ENCODE measurements at regions of chr11 and their contacts with region 1.

Region 1: DNA sequence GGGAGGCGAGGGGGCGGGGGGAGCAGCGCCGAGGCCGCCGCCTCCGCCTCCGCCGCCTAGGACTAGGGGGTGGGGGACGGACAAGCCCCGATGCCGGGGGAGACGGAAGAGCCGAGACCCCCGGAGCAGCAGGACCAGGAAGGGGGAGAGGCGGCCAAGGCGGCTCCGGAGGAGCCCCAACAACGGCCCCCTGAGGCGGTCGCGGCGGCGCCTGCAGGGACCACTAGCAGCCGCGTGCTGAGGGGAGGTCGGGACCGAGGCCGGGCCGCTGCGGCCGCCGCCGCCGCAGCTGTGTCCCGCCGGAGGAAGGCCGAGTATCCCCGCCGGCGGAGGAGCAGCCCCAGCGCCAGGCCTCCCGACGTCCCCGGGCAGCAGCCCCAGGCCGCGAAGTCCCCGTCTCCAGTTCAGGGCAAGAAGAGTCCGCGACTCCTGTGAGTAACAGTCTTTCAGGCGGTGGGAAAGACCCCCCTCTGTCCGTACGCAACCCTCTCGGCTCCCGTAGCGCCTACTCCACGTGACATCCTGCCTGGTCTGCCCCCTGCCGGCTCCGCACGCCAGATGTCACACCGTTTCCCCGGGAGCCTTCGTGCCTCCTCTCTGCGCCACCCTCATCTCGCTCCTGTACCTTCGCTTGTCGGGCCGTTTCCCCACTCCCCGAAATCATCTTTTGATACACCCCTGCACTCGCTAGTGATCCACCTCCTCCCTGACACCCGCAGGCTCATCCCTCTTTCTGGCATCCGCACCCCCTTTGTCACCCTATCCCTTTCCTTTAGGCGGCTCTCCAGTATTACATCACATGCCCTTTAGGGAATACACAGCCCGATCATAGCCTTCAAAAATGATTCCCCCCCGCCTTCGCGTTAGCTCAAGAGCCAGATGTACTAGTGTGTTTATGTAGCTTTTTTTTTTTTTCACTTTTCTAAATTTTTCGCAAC is 598 bp downstream of the ZFP91 start:
- DNase-seq: peak; percentile 85
- H3K4me3 Mint-ChIP-seq: peak overlapping the region; percentile 94
- H3K27ac Mint-ChIP-seq: peak overlapping the region; percentile 100
- H3K4me1 Mint-ChIP-seq: peaks cover 73% of the 10 kb centered on the region
- H3K27me3 Mint-ChIP-seq: no peaks in the 10 kb centered on the region

Region 2: GRCh38 chr11:57335343-57336110 is 1243.9 kb before region 1 on chr11 and contains the start of gene SSRP1:
- intact Hi-C with region 1: loop called (anchors 5 kb)
- DNase-seq: peak; percentile 81
- H3K4me3 Mint-ChIP-seq: peak within 1 kb of the TSS; percentile 92
- H3K27ac Mint-ChIP-seq: peak within 1 kb of the TSS; percentile 99
- H3K4me1 Mint-ChIP-seq: peaks cover 39% of the 10 kb centered on the region
- H3K27me3 Mint-ChIP-seq: peaks cover 1% of the 10 kb centered on the region
- total RNA-seq, gene SSRP1: 235 and 239 TPM in 2 replicates

Region 3: DNA sequence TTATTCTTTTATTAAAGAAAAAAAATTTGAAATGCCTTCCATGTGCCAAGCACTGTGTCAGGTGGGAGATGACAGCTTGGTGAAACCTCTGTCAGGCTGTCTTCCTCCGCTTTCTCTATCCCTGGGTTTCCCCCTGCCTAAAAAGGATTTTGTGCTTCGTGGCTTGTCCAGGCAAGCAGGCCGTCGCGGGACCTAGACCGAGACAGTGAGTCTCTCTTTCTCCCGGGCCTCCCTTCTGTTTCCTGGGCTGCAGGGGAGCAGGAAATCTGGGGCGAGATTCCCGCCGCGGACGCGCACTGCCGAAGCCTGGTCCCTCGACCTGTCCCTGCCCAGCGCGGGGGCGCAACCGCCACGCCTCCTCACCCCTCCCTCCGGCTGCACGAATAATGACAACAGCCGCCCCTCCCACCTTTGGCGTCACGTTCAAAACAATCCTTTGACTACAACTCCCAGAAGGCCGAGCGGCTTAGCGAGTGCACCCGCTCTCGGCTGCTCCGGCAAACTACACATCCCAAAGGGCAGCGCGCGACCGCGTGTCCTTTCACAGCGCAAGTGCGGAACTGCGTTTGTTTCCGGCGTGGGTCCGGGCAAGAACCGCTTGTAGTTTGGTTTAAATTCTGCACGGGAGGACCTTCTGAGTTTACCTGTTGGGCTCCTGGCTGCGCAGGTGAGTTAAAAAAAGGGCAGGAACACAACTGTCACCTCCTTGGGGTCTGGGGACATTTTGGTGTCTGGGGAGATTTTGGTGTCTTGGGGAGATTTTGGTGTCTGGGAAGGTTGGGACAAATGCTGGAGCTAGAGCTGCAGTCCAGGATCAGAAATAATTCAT is 922.1 kb before region 1 on chr11 and contains the start of gene CLP1:
- intact Hi-C with region 1: loop called (anchors 1 kb)
- DNase-seq: peak; percentile 99
- H3K4me3 Mint-ChIP-seq: peak within 1 kb of the TSS; percentile 96
- H3K27ac Mint-ChIP-seq: peak within 1 kb of the TSS; percentile 95
- H3K4me1 Mint-ChIP-seq: peaks cover 18% of the 10 kb centered on the region
- H3K27me3 Mint-ChIP-seq: no peaks in the 10 kb centered on the region
- total RNA-seq, gene CLP1: 17.8 and 19.1 TPM in 2 replicates

Region 4: DNA sequence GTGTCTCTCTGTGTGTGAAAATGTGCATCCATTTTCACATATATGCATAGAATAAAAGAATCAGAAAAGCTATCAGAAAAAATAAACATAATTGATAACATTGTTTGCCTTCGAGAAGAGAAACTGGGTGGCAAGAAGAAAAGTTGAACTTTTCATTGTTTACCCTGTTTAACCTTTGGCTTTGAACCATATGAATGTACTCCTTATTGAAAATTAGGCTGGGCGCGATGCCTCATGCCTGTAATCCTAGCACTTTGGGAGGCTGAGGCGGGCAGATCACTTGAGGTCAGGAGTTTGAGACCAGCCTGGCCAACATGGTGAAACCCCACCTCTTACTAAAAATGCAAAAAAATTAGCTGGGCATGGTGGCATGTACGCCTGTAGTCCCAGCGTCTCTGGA is 567.7 kb before region 1 on chr11:
- intact Hi-C with region 1: no loop called
- DNase-seq: no peak
- H3K4me3 Mint-ChIP-seq: no peak overlapping the region
- H3K27ac Mint-ChIP-seq: no peak overlapping the region
- H3K4me1 Mint-ChIP-seq: no peaks in the 10 kb centered on the region
- H3K27me3 Mint-ChIP-seq: no peaks in the 10 kb centered on the region

Region 5: GRCh38 chr11:58524232-58525036 is 55.0 kb before region 1 on chr11:
- intact Hi-C with region 1: loop called (anchors 1 kb)
- DNase-seq: no peak
- H3K4me3 Mint-ChIP-seq: peak overlapping the region; percentile 74
- H3K27ac Mint-ChIP-seq: peak overlapping the region; percentile 77
- H3K4me1 Mint-ChIP-seq: peaks cover 36% of the 10 kb centered on the region
- H3K27me3 Mint-ChIP-seq: no peaks in the 10 kb centered on the region

Region 6: DNA sequence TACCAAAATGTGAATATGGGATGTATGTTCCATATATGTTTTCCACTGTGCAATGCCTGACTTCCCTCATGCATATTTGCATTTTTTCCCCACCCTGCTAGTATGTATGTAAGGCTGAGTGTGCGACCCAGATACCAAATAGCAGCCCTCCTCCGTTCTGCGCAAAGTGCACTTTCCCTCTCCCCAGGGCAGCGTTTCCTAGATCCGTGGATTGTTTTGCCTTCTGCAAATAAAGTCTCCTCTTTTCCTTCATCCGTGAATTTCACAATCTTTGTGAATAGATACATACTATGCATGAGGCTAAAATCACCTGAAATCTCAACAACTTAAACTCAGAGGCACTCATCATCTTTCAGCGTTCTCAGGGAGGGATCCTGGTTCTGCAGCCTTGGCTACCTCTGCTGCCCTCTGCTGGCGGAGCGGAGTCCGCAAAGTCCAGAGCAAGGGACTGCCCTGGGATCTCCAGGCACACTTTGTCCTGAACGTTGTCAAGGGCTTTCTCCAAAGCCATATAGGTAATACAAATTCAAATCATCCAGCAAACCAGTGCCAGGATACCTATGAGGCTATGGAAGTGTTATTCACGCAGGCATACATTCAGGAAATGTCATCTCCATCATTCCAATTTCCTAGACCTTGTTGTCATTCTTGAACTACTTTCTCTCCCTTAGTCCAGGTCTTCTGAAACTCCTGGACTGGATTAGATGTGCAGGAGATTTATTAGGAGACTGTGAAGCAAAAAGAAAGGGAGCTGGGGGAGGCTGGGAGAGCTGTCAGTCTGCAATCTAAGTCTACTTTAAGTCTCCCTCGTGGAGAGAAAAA is 96.1 kb after region 1 on chr11:
- intact Hi-C with region 1: loop called (anchors 1 kb)
- DNase-seq: peak; percentile 48
- H3K4me3 Mint-ChIP-seq: no peak overlapping the region
- H3K27ac Mint-ChIP-seq: no peak overlapping the region
- H3K4me1 Mint-ChIP-seq: no peaks in the 10 kb centered on the region
- H3K27me3 Mint-ChIP-seq: peaks cover 2% of the 10 kb centered on the region

Region 7: GRCh38 chr11:59550368-59550841 is 970.9 kb after region 1 on chr11:
- intact Hi-C with region 1: loop called (anchors 1 kb)
- DNase-seq: peak; percentile 82
- H3K4me3 Mint-ChIP-seq: peak overlapping the region; percentile 82
- H3K27ac Mint-ChIP-seq: peak overlapping the region; percentile 93
- H3K4me1 Mint-ChIP-seq: peaks cover 38% of the 10 kb centered on the region
- H3K27me3 Mint-ChIP-seq: peaks cover 19% of the 10 kb centered on the region